ENCODE measurements at regions of chr1 and their contacts with region 1.

Region 1: DNA sequence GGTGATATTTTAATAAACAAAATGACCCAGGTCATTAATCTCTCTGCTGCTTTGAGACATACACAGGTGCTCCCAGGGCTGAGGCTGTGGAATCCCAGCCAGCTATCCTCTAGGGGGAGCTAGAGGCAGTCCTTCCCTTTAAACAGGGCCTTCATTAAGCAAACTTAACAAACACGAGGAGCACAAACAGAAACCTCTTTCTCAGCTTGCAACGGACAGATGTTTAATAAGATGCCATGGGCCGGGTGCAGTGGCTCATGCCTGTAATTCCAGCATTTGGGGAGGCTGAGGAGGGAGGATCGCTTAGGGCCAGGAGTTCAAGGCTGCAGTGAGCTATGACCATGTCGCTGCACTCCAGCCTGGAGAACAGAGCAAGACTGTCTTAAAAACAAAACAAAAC is 106.7 kb downstream of the HIVEP3 start:
- DNase-seq: peak; percentile 72
- H3K4me3 ChIP-seq: no peak overlapping the region
- H3K27ac ChIP-seq: peak overlapping the region; percentile 95
- H3K4me1 ChIP-seq: peaks cover 17% of the 10 kb centered on the region
- H3K27me3 ChIP-seq: no peaks in the 10 kb centered on the region
- CTCF ChIP-seq: peak; percentile 75 to 82
- POLR2A ChIP-seq: no peak

Region 2: DNA sequence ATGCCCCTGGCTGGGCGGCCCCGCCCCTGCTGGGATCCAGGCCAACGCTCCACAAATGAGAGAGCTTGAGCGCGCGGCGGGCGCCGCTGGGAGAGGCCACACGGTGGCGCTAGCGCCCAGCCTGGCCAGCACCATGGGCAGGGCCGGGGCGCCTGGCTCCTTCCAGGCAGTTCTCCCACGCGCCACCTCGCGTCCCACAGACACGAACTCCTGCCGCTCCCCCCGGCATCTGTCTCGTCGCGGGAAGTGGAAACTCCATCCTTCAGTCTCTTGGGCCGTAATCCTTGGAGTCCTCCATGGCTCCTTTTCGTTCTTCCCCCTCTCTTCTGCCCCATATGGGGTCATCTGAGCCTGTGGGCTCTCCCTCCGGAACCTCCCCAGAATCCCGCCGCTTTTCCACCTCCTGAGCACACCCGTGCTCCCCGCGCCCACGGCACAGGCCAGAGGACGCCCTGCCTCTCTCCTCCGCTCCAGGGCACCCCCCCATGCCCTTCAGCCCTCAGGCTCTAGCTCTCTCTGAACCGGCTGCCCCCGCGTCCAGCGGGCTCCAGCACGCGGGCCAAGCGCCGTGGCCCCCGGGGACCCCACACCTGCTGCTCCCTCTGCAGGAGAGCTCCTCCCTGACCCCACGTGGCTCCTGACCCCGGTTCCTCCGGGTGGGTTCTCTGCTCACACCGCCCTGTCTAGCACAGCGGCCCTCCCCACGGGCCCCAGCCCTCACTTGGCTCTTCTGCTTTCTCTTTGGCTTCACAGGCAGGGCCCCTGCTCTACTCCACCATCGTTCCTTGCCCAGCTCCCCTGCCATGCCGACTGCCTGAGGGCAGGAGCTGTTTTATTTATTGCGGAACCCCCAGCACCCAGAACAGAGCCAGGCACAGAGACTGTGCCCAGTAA is 295.6 kb before region 1 on chr1:
- CTCF ChIA-PET with region 1: no interaction called
- POLR2A ChIA-PET with region 1: no interaction called
- dilution Hi-C with region 1: no loop called
- intact Hi-C with region 1: no loop called
- DNase-seq: peak; percentile 91
- H3K4me3 ChIP-seq: peak overlapping the region in 2 of 3 experiments; percentile 13 to 14
- H3K27ac ChIP-seq: no peak overlapping the region
- H3K4me1 ChIP-seq: peaks cover 4% of the 10 kb centered on the region
- H3K27me3 ChIP-seq: no peaks in the 10 kb centered on the region
- CTCF ChIP-seq: peak; percentile 94 to 99
- POLR2A ChIP-seq: no peak

Region 3: GRCh38 chr1:41713557-41714327 is 98.3 kb before region 1 on chr1:
- CTCF ChIA-PET with region 1: interaction called, 3 read pairs
- POLR2A ChIA-PET with region 1: no interaction called
- dilution Hi-C with region 1: no loop called
- intact Hi-C with region 1: loop called (anchors 5 kb)
- DNase-seq: peak; percentile 86
- H3K4me3 ChIP-seq: no peak overlapping the region
- H3K27ac ChIP-seq: peak overlapping the region; percentile 71
- H3K4me1 ChIP-seq: peaks cover 21% of the 10 kb centered on the region
- H3K27me3 ChIP-seq: no peaks in the 10 kb centered on the region
- CTCF ChIP-seq: no peak
- POLR2A ChIP-seq: no peak

Region 4: GRCh38 chr1:41862384-41863174 is 50.5 kb after region 1 on chr1:
- CTCF ChIA-PET with region 1: interaction called, 6 read pairs
- POLR2A ChIA-PET with region 1: no interaction called
- dilution Hi-C with region 1: no loop called
- intact Hi-C with region 1: loop called (anchors 2 kb)
- DNase-seq: peak; percentile 76
- H3K4me3 ChIP-seq: no peak overlapping the region
- H3K27ac ChIP-seq: peak overlapping the region; percentile 55
- H3K4me1 ChIP-seq: peaks cover 24% of the 10 kb centered on the region
- H3K27me3 ChIP-seq: no peaks in the 10 kb centered on the region
- CTCF ChIP-seq: no peak
- POLR2A ChIP-seq: no peak

Region 5: GRCh38 chr1:41955461-41956159 is 143.6 kb after region 1 on chr1:
- CTCF ChIA-PET with region 1: interaction called, 4 read pairs
- POLR2A ChIA-PET with region 1: no interaction called
- dilution Hi-C with region 1: no loop called
- intact Hi-C with region 1: loop called (anchors 1 kb)
- DNase-seq: peak; percentile 84
- H3K4me3 ChIP-seq: peak overlapping the region in 1 of 3 experiments; percentile 13
- H3K27ac ChIP-seq: peak overlapping the region; percentile 94
- H3K4me1 ChIP-seq: peaks cover 35% of the 10 kb centered on the region
- H3K27me3 ChIP-seq: no peaks in the 10 kb centered on the region
- CTCF ChIP-seq: no peak
- POLR2A ChIP-seq: no peak

Region 6: DNA sequence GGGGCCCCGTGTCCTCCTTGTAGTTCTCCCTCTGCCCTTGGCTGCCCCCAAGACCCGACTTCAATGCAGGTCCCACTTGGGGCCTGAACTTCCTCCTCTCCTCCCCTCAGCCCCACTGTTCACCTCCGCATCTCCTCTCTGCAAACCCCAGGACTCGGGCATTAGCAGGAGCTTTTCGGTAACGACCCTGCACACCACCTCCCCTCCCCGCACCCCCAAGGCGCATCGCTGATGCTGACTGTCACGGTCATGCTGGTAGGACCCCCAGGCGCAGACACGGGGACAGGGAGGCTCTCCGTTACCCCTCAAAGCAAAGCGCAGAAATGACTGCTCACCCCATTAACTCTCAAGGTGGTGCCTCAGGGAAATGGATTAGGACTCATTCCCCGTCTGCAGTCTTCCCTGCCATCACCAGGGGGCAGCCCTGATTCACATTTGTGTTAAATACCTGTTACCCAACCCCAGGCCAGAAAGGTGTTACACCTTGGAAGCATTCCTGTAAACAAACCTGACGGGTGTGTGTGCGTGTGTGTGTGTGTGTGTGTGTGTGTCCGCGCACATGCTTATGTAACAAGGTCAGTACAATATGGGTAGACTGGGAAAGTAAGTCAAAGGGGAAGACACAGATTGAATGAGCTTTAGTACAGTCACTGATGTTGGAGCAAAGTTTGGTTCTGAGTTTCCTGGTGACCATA is 334.7 kb after region 1 on chr1:
- CTCF ChIA-PET with region 1: interaction called, 8 read pairs
- POLR2A ChIA-PET with region 1: no interaction called
- dilution Hi-C with region 1: no loop called
- intact Hi-C with region 1: loop called (anchors 10 kb)
- DNase-seq: peak; percentile 49
- H3K4me3 ChIP-seq: no peak overlapping the region
- H3K27ac ChIP-seq: no peak overlapping the region
- H3K4me1 ChIP-seq: no peaks in the 10 kb centered on the region
- H3K27me3 ChIP-seq: peaks cover 21 to 22% of the 10 kb centered on the region in 2 experiments
- CTCF ChIP-seq: peak; percentile 74 to 91
- POLR2A ChIP-seq: no peak

Measured in endothelial cell of umbilical vein (primary cell).